PC-9 (cell line): ENCODE measurements at regions of chr21 and their contacts with region 1.

Region 1: GRCh38 chr21:45363921-45364467 is 41.0 kb upstream of the COL18A1 start:
- DNase-seq: peak; percentile 75 to 91
- H3K4me3 ChIP-seq: peak overlapping the region; percentile 48; the same call in 1 of the 2 replicates
- H3K27ac ChIP-seq: peak overlapping the region; percentile 100
- H3K4me1 ChIP-seq: peaks cover 40% of the 10 kb centered on the region
- H3K27me3 ChIP-seq: no peaks in the 10 kb centered on the region
- CTCF ChIP-seq: no peak

Region 2: GRCh38 chr21:45292399-45293219 is 71.4 kb before region 1 on chr21:
- CTCF ChIA-PET with region 1: no interaction called
- POLR2A ChIA-PET with region 1: no interaction called
- intact Hi-C with region 1: loop called (anchors 2 kb)
- DNase-seq: peak; percentile 41 to 79
- H3K4me3 ChIP-seq: no peak overlapping the region
- H3K27ac ChIP-seq: no peak overlapping the region
- H3K4me1 ChIP-seq: no peaks in the 10 kb centered on the region
- H3K27me3 ChIP-seq: no peaks in the 10 kb centered on the region
- CTCF ChIP-seq: peak; percentile 87

Region 3: DNA sequence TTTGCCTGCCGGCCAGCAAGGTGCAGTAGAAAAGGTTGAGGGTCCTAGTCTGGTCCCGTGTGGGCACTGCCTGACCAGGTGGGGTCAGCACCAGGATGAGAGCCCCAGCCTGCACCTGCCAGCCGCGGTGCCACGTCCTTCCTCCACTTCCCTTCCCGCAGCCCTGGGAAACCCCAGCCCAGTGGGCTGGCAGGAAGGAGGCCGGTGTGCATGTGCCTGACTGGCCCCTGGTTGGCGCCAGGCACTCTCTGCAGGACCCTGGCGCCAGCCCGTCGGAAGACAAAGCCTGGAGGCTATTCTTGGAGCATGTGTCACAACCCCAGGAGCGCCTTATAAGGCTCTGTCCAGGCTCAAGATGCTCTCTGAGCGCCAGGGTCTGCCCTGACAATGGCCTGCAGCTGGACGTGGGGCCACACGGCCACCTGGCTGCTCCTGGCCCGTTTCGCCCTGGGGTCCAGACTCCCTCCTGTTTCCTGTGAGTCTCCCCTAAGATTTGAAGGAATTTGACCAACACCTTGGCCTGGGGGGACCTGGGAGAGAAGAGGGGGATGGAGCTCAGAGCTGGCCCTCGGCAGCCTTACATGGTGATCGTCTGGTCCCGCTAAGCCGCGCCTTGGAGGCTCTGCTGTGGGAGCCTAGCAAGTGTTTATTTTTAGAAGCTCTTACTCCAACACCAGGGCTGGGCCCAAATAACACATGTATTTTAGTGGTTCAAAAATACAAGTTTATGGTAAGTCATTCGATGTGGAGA is 44.4 kb before region 1 on chr21:
- CTCF ChIA-PET with region 1: no interaction called
- POLR2A ChIA-PET with region 1: no interaction called
- intact Hi-C with region 1: loop called (anchors 2 kb)
- DNase-seq: peak in 1 of 2 experiments; percentile 61
- H3K4me3 ChIP-seq: no peak overlapping the region
- H3K27ac ChIP-seq: peak overlapping the region; percentile 53; the same call in 1 of the 2 replicates
- H3K4me1 ChIP-seq: peaks cover 26% of the 10 kb centered on the region
- H3K27me3 ChIP-seq: no peaks in the 10 kb centered on the region
- CTCF ChIP-seq: no peak

Region 4: GRCh38 chr21:45388011-45388521 is 24.1 kb after region 1 on chr21:
- CTCF ChIA-PET with region 1: interaction called, 3 read pairs
- POLR2A ChIA-PET with region 1: interaction called, 12 read pairs
- intact Hi-C with region 1: no loop called
- DNase-seq: no peak
- H3K4me3 ChIP-seq: no peak overlapping the region
- H3K27ac ChIP-seq: no peak overlapping the region
- H3K4me1 ChIP-seq: peaks cover 9% of the 10 kb centered on the region; the same call in 1 of the 2 replicates
- H3K27me3 ChIP-seq: peaks cover 6% of the 10 kb centered on the region; the same call in 1 of the 2 replicates
- CTCF ChIP-seq: no peak

Region 5: GRCh38 chr21:45404730-45405270 is 40.8 kb after region 1 on chr21 and contains the start of gene COL18A1:
- CTCF ChIA-PET with region 1: no interaction called
- POLR2A ChIA-PET with region 1: interaction called, 11 read pairs
- intact Hi-C with region 1: loop called (anchors 1 kb)
- DNase-seq: peak in 1 of 2 experiments; percentile 67
- H3K4me3 ChIP-seq: peak within 1 kb of the TSS; percentile 58; the same call in 1 of the 2 replicates
- H3K27ac ChIP-seq: no peak within 1 kb of the TSS
- H3K4me1 ChIP-seq: peaks cover 51% of the 10 kb centered on the region
- H3K27me3 ChIP-seq: no peaks in the 10 kb centered on the region
- CTCF ChIP-seq: no peak
- total RNA-seq, gene COL18A1: 82.4 and 106 TPM in 2 replicates

Region 6: DNA sequence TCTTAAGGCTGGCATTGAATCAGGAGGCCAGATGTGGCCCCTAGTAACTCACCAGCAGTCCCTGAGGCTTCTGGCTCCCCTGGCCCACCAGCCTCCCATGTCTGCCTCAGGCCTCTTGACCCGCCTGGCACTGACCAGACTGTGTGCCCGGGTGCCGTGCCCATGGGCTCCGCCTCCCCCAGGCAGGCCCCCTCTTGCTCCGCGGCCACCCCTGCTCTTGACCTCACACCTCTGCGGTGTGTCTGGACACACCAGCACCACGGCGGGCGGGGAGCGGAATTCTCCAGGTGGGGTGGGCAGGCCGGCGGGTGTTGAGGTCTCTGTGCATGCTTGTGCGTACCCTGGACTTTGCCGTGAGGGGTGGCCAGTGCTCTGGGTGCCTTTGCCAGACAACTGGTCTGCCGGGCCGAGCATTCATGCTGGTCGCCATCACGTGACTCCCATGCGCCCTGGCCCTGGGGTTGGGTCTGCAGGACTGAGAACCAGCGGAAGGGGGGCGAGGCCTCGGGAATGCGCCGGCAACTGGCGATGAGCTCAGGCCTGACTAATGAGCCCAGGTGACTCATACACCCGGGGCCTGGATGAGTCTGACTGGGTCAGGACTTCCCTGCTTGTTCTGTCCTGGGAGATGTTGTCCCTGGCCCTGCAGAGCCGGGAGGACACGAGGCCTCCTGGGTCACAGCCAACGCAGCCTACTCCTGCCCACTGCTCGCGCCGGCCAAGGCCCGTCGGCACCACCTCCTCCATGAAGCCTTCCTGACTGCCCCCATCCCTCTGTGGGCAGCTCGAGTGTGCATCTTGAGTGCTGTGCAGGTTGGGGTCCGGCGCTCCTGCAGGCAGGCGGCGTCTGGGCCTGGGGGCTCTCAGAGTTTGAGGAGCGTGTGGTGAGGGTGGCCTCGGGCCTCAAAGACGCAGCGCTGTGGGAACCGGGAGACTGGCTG is 63.6 kb after region 1 on chr21:
- CTCF ChIA-PET with region 1: no interaction called
- POLR2A ChIA-PET with region 1: no interaction called
- intact Hi-C with region 1: loop called (anchors 2 kb)
- DNase-seq: peak; percentile 75 to 91
- H3K4me3 ChIP-seq: no peak overlapping the region
- H3K27ac ChIP-seq: no peak overlapping the region
- H3K4me1 ChIP-seq: peaks cover 12% of the 10 kb centered on the region
- H3K27me3 ChIP-seq: no peaks in the 10 kb centered on the region
- CTCF ChIP-seq: no peak